Mucosa of descending colon (tissue), 3 donors: ENCODE measurements at regions of chr15 and their contacts with region 1.

Region 1: GRCh38 chr15:27017168-27017809 is 46.3 kb downstream of the GABRG3 start:
- DNase-seq: peak in 1 of 3 donors; percentile 44
- ATAC-seq: no peak
- H3K4me3 ChIP-seq: no peak overlapping the region
- H3K4me1 ChIP-seq: no peaks in the 10 kb centered on the region
- CTCF ChIP-seq: no peak

Region 2: DNA sequence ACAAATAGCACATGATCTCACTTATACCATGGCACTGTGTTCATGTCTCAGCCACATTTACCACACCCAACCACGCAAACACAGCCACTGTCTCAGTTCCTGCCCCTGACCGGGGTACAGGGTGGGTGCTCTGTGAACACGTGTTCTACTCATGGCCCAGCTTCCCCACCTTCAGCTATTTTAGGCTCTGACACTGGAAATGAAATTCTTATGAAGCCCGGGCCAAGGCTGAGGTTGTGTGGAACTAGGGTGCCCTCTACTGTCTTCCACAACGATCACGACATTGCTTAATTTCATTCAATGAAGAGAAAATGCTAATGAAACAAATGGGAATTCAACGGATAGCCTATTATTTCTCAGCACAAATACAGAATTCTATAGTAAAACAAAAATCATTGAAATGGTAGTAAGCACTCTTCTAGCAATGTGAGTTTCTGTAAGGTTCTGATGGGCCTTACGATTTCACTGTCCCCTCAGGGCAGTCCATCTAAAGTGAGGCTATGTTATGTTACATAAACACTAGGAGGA is 152.6 kb before region 1 on chr15:
- intact Hi-C with region 1: no loop called
- DNase-seq: no peak
- ATAC-seq: no peak
- H3K4me3 ChIP-seq: no peak overlapping the region
- H3K4me1 ChIP-seq: no peaks in the 10 kb centered on the region
- CTCF ChIP-seq: no peak

Region 3: GRCh38 chr15:26889298-26889898 is 127.9 kb before region 1 on chr15:
- intact Hi-C with region 1: loop called in 1 of 2 experiments (anchors 10 kb)
- DNase-seq: peak in 1 of 3 donors; percentile 55
- ATAC-seq: no peak
- H3K4me3 ChIP-seq: no peak overlapping the region
- H3K4me1 ChIP-seq: no peaks in the 10 kb centered on the region
- CTCF ChIP-seq: no peak